ENCODE measurements at regions of chr7 and their contacts with region 1.

Region 1: GRCh38 chr7:5450549-5451372 is 27.1 kb upstream of the TNRC18 start:
- DNase-seq: peak; percentile 47 to 72
- ATAC-seq: peak; percentile 76 to 90 (median 77)
- H3K4me3 ChIP-seq: no peak overlapping the region
- H3K27ac ChIP-seq: no peak overlapping the region
- H3K4me1 ChIP-seq: no peaks in the 10 kb centered on the region
- H3K27me3 ChIP-seq: no peaks in the 10 kb centered on the region
- CTCF ChIP-seq: peak; percentile 67

Region 2: GRCh38 chr7:5237286-5237685 is 213.5 kb before region 1 on chr7:
- intact Hi-C with region 1: loop called (anchors 2 to 5 kb)
- DNase-seq: peak; percentile 77 to 87
- ATAC-seq: peak; percentile 31 to 50 (median 49)
- H3K4me3 ChIP-seq: peak overlapping the region; percentile 24
- H3K27ac ChIP-seq: no peak overlapping the region
- H3K4me1 ChIP-seq: peaks cover 5% of the 10 kb centered on the region
- H3K27me3 ChIP-seq: peaks cover 0 to 10% (median 2%) of the 10 kb centered on the region in 3 donors
- CTCF ChIP-seq: no peak

Region 3: GRCh38 chr7:5243261-5243660 is 207.5 kb before region 1 on chr7:
- intact Hi-C with region 1: loop called (anchors 2 to 5 kb)
- DNase-seq: no peak
- ATAC-seq: no peak
- H3K4me3 ChIP-seq: no peak overlapping the region
- H3K27ac ChIP-seq: no peak overlapping the region
- H3K4me1 ChIP-seq: peaks cover 5% of the 10 kb centered on the region
- H3K27me3 ChIP-seq: peaks cover 0 to 8% (median 2%) of the 10 kb centered on the region in 3 donors
- CTCF ChIP-seq: no peak

Region 4: DNA sequence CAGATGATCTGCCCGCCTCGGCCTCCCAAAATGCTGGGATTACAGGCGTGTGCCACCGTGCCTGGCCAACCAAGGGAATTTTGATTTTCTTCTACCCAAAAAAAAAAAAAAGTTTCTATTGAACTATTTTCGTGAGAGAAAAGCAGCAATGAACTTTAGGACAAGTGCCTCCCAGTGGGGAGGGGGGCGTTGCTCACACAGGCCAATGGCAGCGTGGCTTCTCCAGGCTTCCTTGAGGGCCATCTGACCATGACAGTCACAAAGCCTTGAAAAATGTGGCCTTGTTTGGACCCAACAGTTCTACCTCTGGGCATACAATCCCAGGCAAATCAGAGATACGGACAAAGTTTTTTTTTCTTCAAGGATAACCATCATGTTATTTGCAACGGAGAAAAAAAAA is 83.1 kb before region 1 on chr7:
- intact Hi-C with region 1: loop called (anchors 2 to 5 kb)
- DNase-seq: no peak
- ATAC-seq: no peak
- H3K4me3 ChIP-seq: no peak overlapping the region
- H3K27ac ChIP-seq: no peak overlapping the region
- H3K4me1 ChIP-seq: no peaks in the 10 kb centered on the region
- H3K27me3 ChIP-seq: no peaks in the 10 kb centered on the region
- CTCF ChIP-seq: no peak

Region 5: DNA sequence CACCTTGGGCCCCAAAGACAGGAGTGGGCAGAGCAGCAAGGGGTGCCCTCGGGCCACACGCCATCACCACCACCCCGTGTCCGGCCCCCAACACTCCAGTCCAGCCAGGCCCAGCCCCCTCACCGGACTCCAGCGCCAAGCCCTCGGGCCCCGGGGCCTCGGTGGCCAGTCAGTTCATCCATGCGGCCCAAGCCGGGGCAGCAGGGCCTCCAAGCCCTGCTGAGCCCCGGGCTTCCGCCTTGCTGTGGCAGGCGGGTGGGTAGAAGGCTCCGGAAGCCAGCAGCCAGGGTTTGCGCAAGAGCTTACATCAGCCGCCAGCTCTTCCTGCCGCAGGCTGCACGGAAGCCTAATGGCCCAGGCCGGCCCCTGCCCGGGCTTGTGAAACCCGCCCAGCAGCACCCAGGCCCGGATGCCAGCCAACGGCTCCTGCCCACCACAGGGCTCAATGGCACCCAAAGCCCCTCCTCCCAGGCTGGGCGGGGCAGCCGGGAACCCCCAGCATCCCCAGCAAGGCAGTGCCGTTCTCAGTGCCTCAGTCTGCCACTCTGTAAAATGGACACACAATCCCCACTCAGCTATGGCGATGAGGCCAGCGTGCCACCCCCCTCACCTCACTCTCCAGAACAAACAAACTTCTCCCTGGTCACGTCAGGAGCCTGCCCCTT is 53.6 kb before region 1 on chr7:
- intact Hi-C with region 1: loop called in 1 of 2 experiments (anchors 5 kb)
- DNase-seq: peak; percentile 85 to 92
- ATAC-seq: peak; percentile 88 to 94 (median 90)
- H3K4me3 ChIP-seq: peak overlapping the region; percentile 61
- H3K27ac ChIP-seq: peak overlapping the region; percentile 74
- H3K4me1 ChIP-seq: peaks cover 9% of the 10 kb centered on the region
- H3K27me3 ChIP-seq: no peaks in the 10 kb centered on the region
- CTCF ChIP-seq: no peak